Activated CD8-positive, alpha-beta T cell treated with anti-CD3 and anti-CD28 coated beads, Interleukin-2, amount 10 ng/mL, durations not matched to agents 7 days and 5 days (primary cell): ENCODE measurements at regions of chr12 and their contacts with region 1.

Region 1: DNA sequence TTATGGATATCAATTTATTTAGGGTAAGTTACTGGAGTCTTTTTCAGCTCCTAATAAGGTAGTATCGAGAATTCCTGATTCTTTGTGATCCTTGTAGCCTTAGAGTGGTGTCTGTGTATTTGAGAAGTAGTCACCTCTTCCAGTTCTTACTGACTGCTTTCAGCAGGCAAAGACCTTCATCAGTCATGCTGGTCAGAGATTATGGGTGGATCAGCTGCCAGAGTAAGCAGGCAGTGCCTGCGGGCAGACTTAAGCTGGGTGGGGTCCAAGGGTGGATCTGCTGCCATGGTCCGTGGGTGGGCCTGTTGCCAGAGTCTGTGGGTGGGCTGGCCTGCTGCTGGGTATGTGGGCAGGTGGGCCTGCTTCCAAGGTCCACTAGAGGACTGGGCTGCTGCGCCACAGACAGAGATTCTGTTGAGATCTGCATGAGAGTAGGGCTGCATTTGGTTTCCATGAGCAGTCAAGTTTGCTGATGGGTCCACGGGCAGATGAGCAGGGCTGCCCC is 188.7 kb downstream of the ANO2 start:
- DNase-seq: no peak
- ATAC-seq: no peak
- H3K4me3 Mint-ChIP-seq: no peak overlapping the region
- H3K27ac Mint-ChIP-seq: no peak overlapping the region
- H3K4me1 Mint-ChIP-seq: no peaks in the 10 kb centered on the region
- H3K27me3 Mint-ChIP-seq: peaks cover 10% of the 10 kb centered on the region

Region 2: DNA sequence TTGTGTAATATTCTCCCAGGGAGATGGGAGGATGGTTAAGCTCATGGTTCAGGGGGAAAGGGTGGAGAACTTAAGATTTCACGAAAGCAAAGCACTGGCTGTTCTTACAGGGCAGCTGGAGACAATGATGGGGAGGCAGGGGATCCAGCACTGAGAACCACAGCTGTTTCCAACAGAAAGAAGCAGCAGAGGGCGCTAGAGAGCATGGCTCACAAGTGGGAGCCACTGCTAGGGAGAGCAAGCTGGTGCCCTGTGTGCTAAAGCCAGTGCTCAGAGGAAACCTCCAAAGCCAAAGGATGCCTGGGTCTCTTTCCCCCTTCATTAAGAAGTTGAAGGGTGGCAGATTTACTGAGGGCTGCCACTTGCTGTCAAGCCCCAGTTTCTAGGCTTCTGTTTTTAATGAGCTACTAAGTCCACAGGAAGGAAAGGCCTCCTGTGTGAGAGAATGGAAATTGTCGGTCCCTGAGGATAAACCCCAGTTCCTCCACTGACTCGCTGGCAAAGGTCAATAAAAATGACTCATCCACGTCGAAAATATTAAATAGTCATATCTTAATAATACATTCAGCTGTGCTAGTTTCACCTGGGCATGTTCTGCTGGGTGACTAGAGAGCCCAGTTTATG is 11.0 kb before region 1 on chr12:
- CTCF ChIA-PET with region 1: interaction called, 15 read pairs
- POLR2A ChIA-PET with region 1: no interaction called
- DNase-seq: peak; percentile 70
- ATAC-seq: peak; percentile 75
- H3K4me3 Mint-ChIP-seq: no peak overlapping the region
- H3K27ac Mint-ChIP-seq: no peak overlapping the region
- H3K4me1 Mint-ChIP-seq: peaks cover 10% of the 10 kb centered on the region
- H3K27me3 Mint-ChIP-seq: no peaks in the 10 kb centered on the region

Region 3: DNA sequence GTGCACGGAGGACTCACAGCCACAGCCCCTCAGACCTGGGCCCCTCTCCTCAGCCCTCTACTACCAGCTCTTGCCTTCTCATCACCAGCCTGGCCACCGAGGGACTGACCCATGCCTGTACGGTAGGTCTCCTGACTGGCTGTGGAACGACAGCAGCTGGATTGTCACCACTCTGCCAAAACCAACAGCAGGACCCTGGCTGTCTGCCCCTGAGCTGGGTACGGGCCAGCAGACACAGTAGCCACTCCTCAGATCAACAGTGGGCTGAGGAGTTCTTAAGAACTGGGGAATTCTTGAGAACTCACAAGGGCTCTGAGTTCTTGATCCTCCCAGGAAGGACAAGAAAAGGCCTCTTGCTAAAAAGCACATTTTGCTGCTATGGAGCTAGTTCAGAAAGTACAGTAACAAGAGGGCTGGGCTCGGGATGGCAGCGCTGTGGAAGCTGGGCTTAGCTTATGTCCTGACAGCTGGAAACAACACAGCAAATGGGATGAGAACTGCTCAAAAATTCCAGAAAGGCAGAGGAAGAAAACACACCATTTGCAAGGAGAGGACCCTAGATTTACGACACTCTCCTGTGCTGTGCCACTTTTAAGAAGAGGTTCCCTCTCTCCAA is 12.3 kb after region 1 on chr12:
- CTCF ChIA-PET with region 1: no interaction called
- POLR2A ChIA-PET with region 1: no interaction called
- DNase-seq: no peak
- ATAC-seq: no peak
- H3K4me3 Mint-ChIP-seq: no peak overlapping the region
- H3K27ac Mint-ChIP-seq: no peak overlapping the region
- H3K4me1 Mint-ChIP-seq: no peaks in the 10 kb centered on the region
- H3K27me3 Mint-ChIP-seq: peaks cover 7% of the 10 kb centered on the region